ENCODE measurements at regions of chr4 and their contacts with region 1.

Region 1: DNA sequence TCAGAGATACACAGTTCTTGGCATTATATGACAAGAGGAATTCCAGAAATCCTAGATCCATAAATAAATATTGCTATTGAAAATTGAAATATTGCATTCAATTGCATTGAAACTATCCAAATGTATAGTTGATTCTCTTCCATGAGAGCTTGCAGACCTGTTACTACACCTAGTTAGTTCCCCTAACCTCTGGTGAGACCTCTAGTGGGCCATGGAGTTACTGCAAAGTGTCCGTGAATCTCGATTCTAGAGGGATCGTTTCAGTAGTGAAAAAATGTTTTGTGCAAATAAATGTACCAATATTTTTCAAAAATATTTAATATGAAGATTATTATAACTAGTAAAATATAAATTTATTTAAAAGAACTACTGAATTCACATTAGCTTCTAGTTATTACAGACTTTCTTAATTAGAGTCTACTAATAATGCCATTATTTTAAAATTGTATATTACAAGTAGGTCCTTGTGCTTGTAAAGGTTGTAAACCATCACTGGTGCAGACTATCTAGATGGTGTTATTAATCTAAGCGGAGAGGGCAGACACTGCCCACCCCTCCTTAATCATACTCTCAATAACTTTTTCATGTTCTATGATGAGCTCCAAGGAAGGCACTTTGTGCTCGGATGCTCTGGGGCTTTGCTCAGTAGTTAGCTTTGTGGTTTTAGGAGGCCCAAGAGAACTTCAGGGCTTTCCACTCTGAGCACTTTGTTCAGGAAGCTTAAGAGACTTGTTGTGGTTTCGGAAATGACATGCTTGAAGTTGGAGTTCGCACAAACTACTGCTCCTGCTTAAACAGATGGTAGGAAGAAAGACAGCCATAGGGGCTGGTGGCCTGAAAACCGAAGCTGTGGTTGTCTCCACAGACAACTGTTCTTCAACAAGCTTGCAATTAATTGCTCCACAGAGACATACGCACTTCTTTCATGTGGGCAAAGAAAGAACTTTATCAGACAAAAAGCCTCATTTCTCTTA is 42.8 kb downstream of the IL21 start:
- DNase-seq: peak; percentile 50
- H3K4me3 ChIP-seq: no peak overlapping the region; a peak in 1 of 4 replicates
- H3K27ac ChIP-seq: no peak overlapping the region
- H3K4me1 ChIP-seq: no peaks in the 10 kb centered on the region
- H3K27me3 ChIP-seq: no peaks in the 10 kb centered on the region
- CTCF ChIP-seq: peak; percentile 71
- EP300 ChIP-seq: no peak
- RAD21 ChIP-seq: peak; percentile 54

Region 2: DNA sequence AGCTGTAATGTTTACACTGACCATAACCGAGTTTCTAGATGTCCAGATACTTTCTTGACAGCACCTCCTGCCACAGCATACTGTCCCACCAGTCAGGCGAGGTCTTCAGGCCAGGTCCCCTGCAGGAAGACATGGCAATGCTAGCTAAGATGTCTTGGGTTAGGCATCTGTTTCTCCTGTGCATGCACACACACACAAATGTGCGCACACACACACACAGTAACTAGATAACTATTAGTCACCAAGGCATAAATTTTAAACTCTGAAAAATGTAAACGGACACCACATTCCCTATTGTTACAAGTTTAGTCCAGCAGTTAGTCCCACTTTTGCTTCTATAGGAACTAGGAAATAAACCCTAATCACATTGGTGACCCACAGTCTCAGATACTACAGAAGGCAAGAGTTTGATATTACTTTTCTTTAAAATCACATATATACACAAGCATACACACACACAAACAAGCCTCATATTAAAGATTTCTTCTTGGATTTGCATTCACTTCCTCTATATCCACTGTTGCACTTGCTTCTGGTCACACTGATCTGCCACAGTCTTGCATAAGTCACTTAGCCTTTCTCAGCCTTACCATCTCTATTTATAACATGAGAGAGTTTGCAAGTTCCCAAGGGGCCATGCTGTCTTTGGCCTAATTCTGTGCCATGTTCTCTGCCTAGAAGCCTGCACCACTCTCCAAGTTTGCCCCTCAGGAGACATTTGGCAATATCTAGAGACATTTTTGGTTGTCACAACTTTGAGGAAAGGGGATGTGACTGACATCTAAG is 10.6 kb after region 1 on chr4:
- CTCF ChIA-PET with region 1: interaction called, 19 read pairs
- POLR2A ChIA-PET with region 1: no interaction called
- DNase-seq: no peak
- H3K4me3 ChIP-seq: no peak overlapping the region
- H3K27ac ChIP-seq: no peak overlapping the region
- H3K4me1 ChIP-seq: peaks cover 0 to 15% of the 10 kb centered on the region in 2 experiments; a peak in 3 of 4 replicates
- H3K27me3 ChIP-seq: no peaks in the 10 kb centered on the region
- CTCF ChIP-seq: no peak
- EP300 ChIP-seq: no peak
- RAD21 ChIP-seq: no peak

Measured in SK-N-SH (cell line).